ENCODE measurements at regions of chr9 and their contacts with region 1.

Region 1: DNA sequence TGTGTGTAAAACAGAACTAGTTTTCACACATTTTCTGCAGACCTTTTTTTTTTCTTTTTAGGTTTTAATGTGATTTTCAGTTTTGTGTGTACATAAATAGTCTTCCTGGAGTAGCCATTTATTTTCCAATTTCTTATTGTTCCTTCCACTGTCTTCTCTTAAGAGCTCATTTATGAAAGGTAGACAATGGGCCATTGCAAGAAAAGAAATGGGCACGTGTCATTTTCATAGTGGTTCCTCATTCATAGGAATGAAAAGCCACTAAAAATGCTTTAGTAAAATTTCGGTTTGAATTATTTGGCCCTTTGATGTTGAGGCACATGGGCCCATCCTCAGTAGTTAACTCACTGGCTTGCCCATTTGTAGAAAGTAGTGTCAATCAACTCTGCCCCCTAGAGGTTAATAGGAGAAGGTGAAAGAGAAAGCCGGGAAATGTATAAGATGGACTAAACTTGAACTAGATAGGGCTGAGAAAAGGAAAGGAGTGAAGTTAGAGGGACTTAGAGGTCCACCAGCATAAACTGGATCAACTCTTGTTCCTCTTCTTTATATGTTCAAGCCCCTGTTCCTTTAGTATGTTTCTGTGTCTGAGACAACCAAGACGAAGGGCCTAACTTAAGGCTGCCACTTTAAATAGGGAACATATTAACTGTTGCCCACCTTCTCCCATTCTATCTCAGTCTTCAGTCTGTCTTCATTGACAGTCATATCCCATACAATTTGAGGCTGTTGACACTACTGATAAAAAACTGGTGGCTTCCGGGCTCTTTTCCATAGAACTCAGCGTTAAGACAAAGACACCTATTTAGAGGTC is 72.6 kb downstream of the SMARCA2 start:
- DNase-seq: peak; percentile 37
- ATAC-seq: peak; percentile 98
- H3K4me3 Mint-ChIP-seq: no peak overlapping the region
- H3K27ac Mint-ChIP-seq: peak overlapping the region; percentile 31
- H3K4me1 Mint-ChIP-seq: peaks cover 22% of the 10 kb centered on the region
- H3K27me3 Mint-ChIP-seq: no peaks in the 10 kb centered on the region
- CTCF ChIP-seq: peak; percentile 80

Region 2: DNA sequence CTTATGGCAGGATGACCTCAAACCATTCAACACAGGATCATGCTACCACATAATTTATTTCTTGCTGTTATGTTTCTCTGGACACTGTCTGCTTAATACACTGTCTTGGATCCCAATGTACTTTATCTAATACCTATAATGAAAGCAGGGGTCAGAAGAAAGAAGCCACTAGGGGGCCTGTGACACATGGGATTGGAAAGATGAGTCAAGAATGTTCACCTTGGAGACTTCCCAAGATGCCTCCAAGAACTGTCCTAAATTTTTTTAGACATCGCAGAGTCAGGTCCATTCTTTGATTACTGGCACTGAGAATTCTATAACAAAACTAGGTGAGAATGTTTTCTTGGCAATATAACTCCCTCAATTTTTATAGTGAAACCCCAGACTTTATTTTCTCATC is 378.4 kb before region 1 on chr9:
- CTCF ChIA-PET with region 1: no interaction called
- POLR2A ChIA-PET with region 1: no interaction called
- intact Hi-C with region 1: loop called (anchors 10 kb)
- DNase-seq: peak; percentile 13
- ATAC-seq: no peak
- H3K4me3 Mint-ChIP-seq: no peak overlapping the region
- H3K27ac Mint-ChIP-seq: no peak overlapping the region
- H3K4me1 Mint-ChIP-seq: no peaks in the 10 kb centered on the region
- H3K27me3 Mint-ChIP-seq: peaks cover 16% of the 10 kb centered on the region
- CTCF ChIP-seq: peak; percentile 58

Region 3: DNA sequence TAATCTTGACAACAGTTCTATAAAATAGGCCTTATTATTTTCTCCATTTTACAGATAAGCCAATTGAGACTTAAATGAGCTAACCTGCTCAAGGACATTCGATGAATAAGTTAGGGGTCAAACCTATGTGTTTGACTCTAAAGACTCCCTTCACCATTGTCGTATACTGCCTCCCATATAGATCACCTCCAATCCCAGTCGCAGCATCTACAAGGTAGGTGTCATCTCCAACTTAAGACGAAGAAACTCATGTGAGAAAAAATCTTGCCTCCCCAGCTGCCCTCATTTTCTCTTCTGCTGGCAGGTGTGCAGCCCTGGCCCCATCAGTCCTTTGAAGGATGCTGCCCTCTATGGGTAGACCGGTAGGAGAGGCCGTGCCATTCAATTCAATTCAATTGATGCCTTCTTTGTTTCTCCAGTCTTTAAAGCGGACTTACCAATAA is 147.8 kb before region 1 on chr9:
- CTCF ChIA-PET with region 1: interaction called, 11 read pairs
- POLR2A ChIA-PET with region 1: no interaction called
- intact Hi-C with region 1: loop called (anchors 5 kb)
- DNase-seq: peak; percentile 46
- ATAC-seq: peak; percentile 74
- H3K4me3 Mint-ChIP-seq: no peak overlapping the region
- H3K27ac Mint-ChIP-seq: no peak overlapping the region
- H3K4me1 Mint-ChIP-seq: no peaks in the 10 kb centered on the region
- H3K27me3 Mint-ChIP-seq: peaks cover 3% of the 10 kb centered on the region
- CTCF ChIP-seq: peak; percentile 76

Region 4: DNA sequence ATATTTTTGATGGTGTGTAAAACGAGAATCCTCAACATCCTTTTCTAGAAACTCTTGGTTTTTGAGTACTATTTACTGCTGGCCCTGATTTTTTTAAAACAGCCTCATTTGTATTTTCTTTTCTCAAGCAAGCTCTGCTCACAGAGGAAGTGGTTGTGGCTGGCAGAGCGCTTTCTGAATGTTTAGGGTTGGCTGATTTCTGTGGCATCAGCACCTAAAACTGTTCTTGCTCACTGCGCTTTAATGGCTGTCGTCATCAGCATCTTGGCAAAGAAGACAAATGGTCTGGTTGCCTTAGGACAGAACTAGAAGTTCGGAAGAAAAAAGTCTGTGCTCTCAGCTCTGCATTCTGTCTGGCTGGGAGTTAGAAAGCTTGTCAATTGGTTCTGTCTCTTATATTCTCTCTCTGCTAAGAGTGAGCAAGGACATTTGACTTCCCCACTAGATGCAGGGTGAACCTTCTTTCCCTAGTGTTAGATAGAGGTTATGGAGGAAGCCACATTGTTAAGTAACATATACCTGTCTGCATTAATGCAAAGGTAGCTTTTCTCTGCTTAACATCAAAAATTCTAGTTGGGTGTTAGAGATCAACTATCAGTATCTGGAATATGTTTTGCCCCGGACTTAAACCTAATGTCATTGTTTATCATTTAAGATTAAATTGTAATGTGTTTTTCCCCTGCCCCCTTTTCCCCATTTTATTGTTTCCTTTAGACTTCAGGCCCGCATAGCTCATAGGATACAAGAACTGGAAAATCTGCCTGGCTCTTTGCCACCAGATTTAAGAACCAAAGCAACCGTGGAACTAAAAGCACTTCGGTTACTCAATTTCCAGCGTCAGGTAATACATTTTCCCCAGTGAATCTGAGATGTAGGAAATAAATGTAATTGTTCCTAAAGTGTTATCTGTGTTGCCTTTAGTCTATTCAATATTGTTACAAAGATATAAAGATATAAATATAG is 33.5 kb before region 1 on chr9:
- CTCF ChIA-PET with region 1: interaction called, 25 read pairs
- POLR2A ChIA-PET with region 1: interaction called, 4 read pairs
- intact Hi-C with region 1: no loop called
- DNase-seq: peak; percentile 85
- ATAC-seq: peak; percentile 97
- H3K4me3 Mint-ChIP-seq: peak overlapping the region; percentile 49
- H3K27ac Mint-ChIP-seq: peak overlapping the region; percentile 88
- H3K4me1 Mint-ChIP-seq: peaks cover 44% of the 10 kb centered on the region
- H3K27me3 Mint-ChIP-seq: no peaks in the 10 kb centered on the region
- CTCF ChIP-seq: no peak

Region 5: GRCh38 chr9:2072752-2073405 is 14.8 kb before region 1 on chr9:
- CTCF ChIA-PET with region 1: interaction called, 11 read pairs
- POLR2A ChIA-PET with region 1: no interaction called
- intact Hi-C with region 1: no loop called
- DNase-seq: no peak
- ATAC-seq: peak; percentile 24
- H3K4me3 Mint-ChIP-seq: no peak overlapping the region
- H3K27ac Mint-ChIP-seq: peak overlapping the region; percentile 28
- H3K4me1 Mint-ChIP-seq: peaks cover 8% of the 10 kb centered on the region
- H3K27me3 Mint-ChIP-seq: no peaks in the 10 kb centered on the region
- CTCF ChIP-seq: no peak

Region 6: DNA sequence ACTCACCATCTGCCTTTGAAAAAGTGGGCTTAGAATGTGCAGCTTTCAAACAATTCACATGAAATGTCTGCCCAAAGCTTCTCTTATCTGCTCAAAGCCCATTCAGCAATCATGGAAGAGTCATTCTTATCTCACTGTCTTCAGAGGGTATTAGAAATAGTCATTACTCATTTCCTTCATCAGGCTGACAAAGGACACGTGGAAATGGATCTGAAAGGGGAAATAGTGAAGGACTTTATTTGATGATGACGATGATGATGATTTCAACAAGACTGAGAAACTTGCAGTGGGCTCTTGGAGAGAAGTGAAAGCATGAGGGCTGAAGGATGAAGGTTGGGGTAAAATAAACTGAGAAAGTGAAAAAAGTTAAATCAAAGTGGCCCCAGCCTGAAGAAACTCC is 121.7 kb after region 1 on chr9:
- CTCF ChIA-PET with region 1: no interaction called
- POLR2A ChIA-PET with region 1: no interaction called
- intact Hi-C with region 1: no loop called
- DNase-seq: no peak
- ATAC-seq: no peak
- H3K4me3 Mint-ChIP-seq: no peak overlapping the region
- H3K27ac Mint-ChIP-seq: no peak overlapping the region
- H3K4me1 Mint-ChIP-seq: no peaks in the 10 kb centered on the region
- H3K27me3 Mint-ChIP-seq: no peaks in the 10 kb centered on the region
- CTCF ChIP-seq: no peak

Measured in activated CD8-positive, alpha-beta T cell treated with anti-CD3 and anti-CD28 coated beads for 36 hours (primary cell).